GM12878 (cell line): ENCODE measurements at regions of chr10 and their contacts with region 1.

Region 1: GRCh38 chr10:97210543-97210961 is 24.8 kb upstream of the SLIT1 start:
- DNase-seq: peak; percentile 37
- ATAC-seq: peak; percentile 91
- H3K4me3 ChIP-seq: no peak overlapping the region
- H3K27ac ChIP-seq: no peak overlapping the region
- H3K4me1 ChIP-seq: peaks cover 3% of the 10 kb centered on the region
- H3K27me3 ChIP-seq: no peaks in the 10 kb centered on the region
- CTCF ChIP-seq: peak; percentile 88 to 94 (median 92)
- EP300 ChIP-seq: no peak
- POLR2A ChIP-seq: no peak
- RAD21 ChIP-seq: peak; percentile 94

Region 2: DNA sequence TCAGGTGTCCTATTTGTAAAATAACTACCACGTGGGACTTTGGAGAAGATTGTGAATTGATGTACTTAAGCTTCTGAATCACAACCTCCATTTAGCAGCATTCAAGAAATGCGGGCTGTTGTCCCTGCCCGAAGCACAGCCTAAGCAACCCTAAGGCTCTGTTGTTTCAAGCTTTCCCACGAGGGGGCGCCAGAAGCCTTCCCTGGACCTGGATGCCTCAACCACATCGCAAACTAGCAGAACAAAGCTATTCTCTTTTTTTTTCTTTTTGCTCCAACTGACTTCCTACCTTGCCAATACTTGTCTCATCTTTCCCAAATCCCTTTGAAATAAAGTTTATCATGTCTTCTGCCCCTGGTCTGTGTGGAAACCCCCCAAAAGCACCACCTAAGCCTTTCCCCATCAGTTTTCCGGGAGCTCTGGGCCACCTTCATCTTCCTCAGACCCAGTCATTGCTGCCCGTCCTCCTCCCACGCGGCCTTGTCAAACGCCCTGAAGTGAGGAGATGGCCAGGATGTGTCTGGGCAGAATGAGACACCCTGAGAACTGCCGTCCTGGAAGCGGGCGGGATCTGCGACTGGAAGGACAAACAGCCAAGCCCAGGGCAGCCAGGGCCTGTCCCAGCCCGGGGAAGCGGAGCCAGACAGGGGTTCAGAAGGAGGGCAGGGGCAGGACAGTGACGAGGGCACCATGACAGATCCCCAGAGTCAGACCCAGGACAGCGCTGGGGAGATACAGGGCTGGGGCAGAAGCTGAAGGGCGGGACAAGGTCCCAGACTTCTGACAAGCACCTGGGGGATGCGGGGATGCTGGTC is 137.5 kb before region 1 on chr10:
- CTCF ChIA-PET with region 1: interaction called, 651 read pairs
- POLR2A ChIA-PET with region 1: interaction called, 3 read pairs
- RAD21 ChIA-PET with region 1: interaction called, 128 read pairs
- SMC1A ChIA-PET with region 1: interaction called, 112 read pairs
- in situ Hi-C with region 1: loop called (anchors 5 kb)
- intact Hi-C with region 1: loop called (anchors 1 kb)
- DNase-seq: peak; percentile 13
- ATAC-seq: peak; percentile 94
- H3K4me3 ChIP-seq: no peak overlapping the region
- H3K27ac ChIP-seq: no peak overlapping the region
- H3K4me1 ChIP-seq: no peaks in the 10 kb centered on the region
- H3K27me3 ChIP-seq: peaks cover 0 to 4% of the 10 kb centered on the region in 2 experiments; a peak in 2 of 4 replicates
- CTCF ChIP-seq: peak; percentile 94 to 96 (median 95)
- EP300 ChIP-seq: no peak
- POLR2A ChIP-seq: no peak
- RAD21 ChIP-seq: peak; percentile 97

Region 3: GRCh38 chr10:97117372-97117771 is 93.2 kb before region 1 on chr10:
- CTCF ChIA-PET with region 1: interaction called, 31 read pairs
- POLR2A ChIA-PET with region 1: no interaction called
- RAD21 ChIA-PET with region 1: interaction called, 8 read pairs
- SMC1A ChIA-PET with region 1: interaction called, 5 read pairs
- in situ Hi-C with region 1: no loop called
- intact Hi-C with region 1: no loop called
- DNase-seq: no peak
- ATAC-seq: peak; percentile 65
- H3K4me3 ChIP-seq: no peak overlapping the region
- H3K27ac ChIP-seq: no peak overlapping the region
- H3K4me1 ChIP-seq: no peaks in the 10 kb centered on the region
- H3K27me3 ChIP-seq: no peaks in the 10 kb centered on the region; a peak in 2 of 4 replicates
- CTCF ChIP-seq: peak in 2 of 3 experiments; percentile 25 to 56; a peak in 3 of 6 replicates
- EP300 ChIP-seq: no peak
- POLR2A ChIP-seq: no peak
- RAD21 ChIP-seq: peak; percentile 47

Region 4: DNA sequence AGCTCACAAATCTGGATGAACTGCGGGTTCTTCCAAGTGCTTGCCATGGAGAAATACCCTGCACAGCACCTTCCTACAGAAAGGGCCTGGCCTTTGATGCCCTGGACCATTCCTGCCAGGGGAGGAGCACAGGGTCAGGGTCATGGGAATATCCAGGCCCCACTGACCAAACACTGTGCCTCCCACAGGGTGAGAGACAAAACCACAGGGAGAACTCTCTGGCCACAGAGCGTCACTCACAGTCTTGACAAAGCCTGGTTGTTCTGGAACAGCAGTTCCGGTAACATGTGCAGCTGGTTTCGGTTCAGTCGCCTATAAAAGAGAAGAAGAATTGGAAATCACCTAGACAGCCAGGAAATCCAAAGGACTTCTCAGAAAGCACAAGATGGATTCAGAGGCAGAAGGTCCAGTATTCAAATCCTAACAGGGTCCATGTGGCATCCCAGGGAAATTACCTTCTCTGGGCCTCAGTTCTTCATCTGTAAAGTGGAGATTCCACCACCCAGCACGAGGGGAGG is 52.9 kb before region 1 on chr10:
- CTCF ChIA-PET with region 1: interaction called, 27 read pairs
- POLR2A ChIA-PET with region 1: no interaction called
- RAD21 ChIA-PET with region 1: no interaction called
- SMC1A ChIA-PET with region 1: interaction called, 7 read pairs
- in situ Hi-C with region 1: no loop called
- intact Hi-C with region 1: no loop called
- DNase-seq: peak; percentile 45
- ATAC-seq: peak; percentile 92
- H3K4me3 ChIP-seq: peak overlapping the region; percentile 29; the same call in 1 of the 2 replicates
- H3K27ac ChIP-seq: peak overlapping the region; percentile 50; the same call in 1 of the 2 replicates
- H3K4me1 ChIP-seq: peaks cover 9% of the 10 kb centered on the region
- H3K27me3 ChIP-seq: no peaks in the 10 kb centered on the region
- CTCF ChIP-seq: peak in 1 of 3 experiments; percentile 8; a peak in 1 of 6 replicates
- EP300 ChIP-seq: peak; percentile 54 to 56; a peak in 2 of 4 replicates
- POLR2A ChIP-seq: no peak
- RAD21 ChIP-seq: no peak

Region 5: GRCh38 chr10:97222326-97222961 is 11.9 kb after region 1 on chr10:
- CTCF ChIA-PET with region 1: interaction called, 49 read pairs
- POLR2A ChIA-PET with region 1: no interaction called
- RAD21 ChIA-PET with region 1: interaction called, 3 read pairs
- SMC1A ChIA-PET with region 1: interaction called, 8 read pairs
- in situ Hi-C with region 1: no loop called
- intact Hi-C with region 1: no loop called
- DNase-seq: no peak
- ATAC-seq: no peak
- H3K4me3 ChIP-seq: no peak overlapping the region
- H3K27ac ChIP-seq: no peak overlapping the region
- H3K4me1 ChIP-seq: peaks cover 7% of the 10 kb centered on the region; the same call in 1 of the 2 replicates
- H3K27me3 ChIP-seq: no peaks in the 10 kb centered on the region
- CTCF ChIP-seq: no peak
- EP300 ChIP-seq: no peak
- POLR2A ChIP-seq: no peak
- RAD21 ChIP-seq: no peak

Region 6: DNA sequence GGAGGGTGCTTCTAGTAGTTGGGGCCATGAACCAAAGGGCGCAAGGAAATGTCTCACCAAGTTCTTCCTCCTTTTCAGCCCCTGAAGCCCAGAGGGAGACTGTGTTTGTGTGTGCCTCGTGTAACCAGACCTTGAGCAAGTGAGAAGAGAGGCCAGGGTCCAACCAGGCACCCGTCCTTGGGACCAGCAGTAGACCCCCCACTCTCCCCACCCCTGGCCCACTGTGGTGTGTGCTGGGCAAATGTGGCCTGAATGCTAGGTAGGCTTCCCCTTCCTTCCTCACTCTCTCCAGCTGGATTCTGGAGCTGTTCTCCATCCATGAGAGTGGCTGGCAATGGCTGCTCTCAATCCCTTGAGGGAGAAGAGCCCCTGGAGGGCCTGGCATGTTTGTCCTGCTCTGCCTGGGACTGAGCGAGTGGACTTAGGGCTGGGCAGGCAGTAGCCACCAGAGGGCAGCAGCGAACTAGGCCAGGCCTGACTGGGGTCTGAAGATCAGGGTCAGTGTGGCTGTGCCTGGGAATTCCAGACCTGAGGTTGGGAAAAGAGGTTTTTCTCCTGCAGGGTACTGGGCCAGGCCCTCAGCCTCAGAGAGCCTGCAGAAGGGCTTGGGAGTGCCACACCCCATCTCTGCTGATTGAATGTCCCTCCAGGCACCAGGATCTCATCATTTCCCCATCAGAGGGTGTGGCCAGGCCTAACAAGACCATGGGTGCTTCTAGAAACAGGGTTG is 548.8 kb after region 1 on chr10:
- CTCF ChIA-PET with region 1: no interaction called
- POLR2A ChIA-PET with region 1: no interaction called
- RAD21 ChIA-PET with region 1: no interaction called
- SMC1A ChIA-PET with region 1: no interaction called
- in situ Hi-C with region 1: no loop called
- intact Hi-C with region 1: no loop called
- DNase-seq: no peak
- ATAC-seq: peak; percentile 94
- H3K4me3 ChIP-seq: no peak overlapping the region
- H3K27ac ChIP-seq: no peak overlapping the region
- H3K4me1 ChIP-seq: peaks cover 3% of the 10 kb centered on the region
- H3K27me3 ChIP-seq: no peaks in the 10 kb centered on the region
- CTCF ChIP-seq: peak; percentile 66 to 90 (median 73)
- EP300 ChIP-seq: no peak
- POLR2A ChIP-seq: no peak
- RAD21 ChIP-seq: peak; percentile 43